Activated CD8-positive, alpha-beta T cell treated with anti-CD3 and anti-CD28 coated beads for 36 hours (primary cell): ENCODE measurements at regions of chr16 and their contacts with region 1.

Region 1: DNA sequence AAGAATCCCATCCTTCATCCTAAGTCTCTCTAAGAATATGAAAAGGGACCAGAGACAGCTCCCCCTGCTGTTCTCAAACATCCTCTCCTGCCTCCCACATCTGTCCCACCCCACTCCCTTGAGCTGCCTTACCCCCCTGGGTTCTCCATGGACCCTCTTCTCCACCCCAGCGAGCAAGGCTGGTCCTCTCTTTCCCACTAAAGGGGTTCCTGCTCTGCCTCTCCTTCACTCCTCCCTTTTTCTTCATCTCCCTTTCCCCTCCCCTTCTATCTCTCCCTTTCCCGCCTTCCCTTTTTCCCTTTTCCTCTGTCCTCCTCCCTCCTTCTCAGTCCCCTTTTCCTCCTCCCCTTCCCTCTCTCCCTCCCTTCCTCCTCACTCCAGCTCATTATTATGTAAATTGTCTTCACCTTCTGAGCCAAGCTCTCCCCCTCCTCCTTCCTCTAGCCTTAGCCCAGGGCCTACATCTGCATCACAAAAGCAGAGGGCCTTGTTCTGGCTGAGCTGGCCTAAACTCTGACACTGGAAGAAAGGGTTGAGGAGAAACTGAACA is 90.0 kb downstream of the GNAO1 start:
- DNase-seq: peak; percentile 18
- ATAC-seq: no peak
- H3K4me3 Mint-ChIP-seq: no peak overlapping the region
- H3K27ac Mint-ChIP-seq: no peak overlapping the region
- H3K4me1 Mint-ChIP-seq: peaks cover 22% of the 10 kb centered on the region
- H3K27me3 Mint-ChIP-seq: no peaks in the 10 kb centered on the region
- CTCF ChIP-seq: peak; percentile 42

Region 2: GRCh38 chr16:56263711-56264608 is 17.4 kb before region 1 on chr16:
- CTCF ChIA-PET with region 1: interaction called, 13 read pairs
- POLR2A ChIA-PET with region 1: interaction called, 4 read pairs
- intact Hi-C with region 1: no loop called
- DNase-seq: no peak
- ATAC-seq: no peak
- H3K4me3 Mint-ChIP-seq: no peak overlapping the region
- H3K27ac Mint-ChIP-seq: no peak overlapping the region
- H3K4me1 Mint-ChIP-seq: peaks cover 22% of the 10 kb centered on the region
- H3K27me3 Mint-ChIP-seq: no peaks in the 10 kb centered on the region
- CTCF ChIP-seq: no peak